H1 (cell line): ENCODE measurements at regions of chr2 and their contacts with region 1.

Region 1: DNA sequence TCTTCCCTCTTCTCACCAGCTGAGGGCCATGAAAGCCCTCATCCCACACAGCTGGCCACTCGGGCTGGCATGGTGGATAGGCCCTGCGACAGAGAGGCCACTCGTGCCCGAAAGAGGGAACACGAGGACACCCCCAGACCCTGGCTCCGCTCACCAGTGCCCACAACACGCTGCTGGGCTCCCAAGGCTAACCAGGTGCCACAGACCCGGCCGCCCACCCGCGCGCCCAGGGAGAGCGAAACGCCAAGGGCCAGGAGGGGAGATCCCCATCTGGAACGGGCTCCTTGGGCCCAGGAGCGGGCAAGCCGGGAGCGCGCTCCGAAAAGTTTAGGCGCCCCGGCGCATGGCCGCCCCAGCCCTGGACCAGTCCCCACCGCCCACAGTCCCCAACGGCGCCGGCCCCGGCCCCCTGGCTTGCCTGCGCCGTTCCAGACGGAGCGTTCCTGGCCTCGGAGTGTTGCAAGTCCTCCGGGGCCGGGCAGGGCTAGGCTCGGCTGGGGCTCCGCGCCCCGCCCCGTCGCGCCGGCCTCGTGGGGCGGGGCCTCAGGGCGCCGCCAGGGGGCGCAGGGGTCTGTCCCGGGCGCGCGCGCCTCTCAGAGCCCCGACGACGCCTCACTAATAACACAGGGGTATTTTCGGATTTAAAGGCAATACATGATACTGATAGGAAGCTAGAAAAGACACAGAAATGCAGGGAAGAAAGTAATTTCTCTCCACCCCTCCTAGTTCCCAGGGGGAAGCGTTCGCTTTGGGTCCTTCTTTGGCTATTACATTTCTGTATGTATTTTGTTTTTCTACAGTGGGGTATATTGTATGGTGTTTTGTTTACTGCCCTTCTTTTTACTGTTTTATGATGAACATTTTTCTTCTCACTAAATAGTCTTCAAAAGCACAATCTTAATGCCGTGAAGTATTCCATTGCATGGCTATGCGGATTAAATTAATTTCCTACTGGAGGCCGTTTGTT is at the start of gene TMBIM1:
- DNase-seq: peak in 1 of 2 experiments; percentile 88
- H3K4me3 ChIP-seq: peak within 1 kb of the TSS; percentile 51 to 66 (median 64)
- H3K27ac ChIP-seq: no peak within 1 kb of the TSS
- H3K4me1 ChIP-seq: peaks cover 0 to 9% (median 4%) of the 10 kb centered on the region in 4 experiments; a peak in 6 of 7 replicates
- H3K27me3 ChIP-seq: no peaks in the 10 kb centered on the region
- CTCF ChIP-seq: peak; percentile 64 to 87 (median 73)
- EP300 ChIP-seq: no peak
- POLR2A ChIP-seq: no peak
- RAD21 ChIP-seq: peak; percentile 34 to 66; a peak in 3 of 4 replicates
- total RNA-seq, gene TMBIM1: 22.1 and 24.5 TPM in 2 replicates

Region 2: GRCh38 chr2:218387374-218388194 is 95.3 kb after region 1 on chr2:
- CTCF ChIA-PET with region 1: interaction called, 94 read pairs
- POLR2A ChIA-PET with region 1: no interaction called
- DNase-seq: peak in 1 of 2 experiments; percentile 94
- H3K4me3 ChIP-seq: peak overlapping the region; percentile 41 to 76 (median 58)
- H3K27ac ChIP-seq: no peak overlapping the region; the same call in 1 of the 2 replicates
- H3K4me1 ChIP-seq: peaks cover 0 to 5% (median 3%) of the 10 kb centered on the region in 4 experiments; a peak in 5 of 7 replicates
- H3K27me3 ChIP-seq: peaks cover 0 to 17% (median 11%) of the 10 kb centered on the region in 4 experiments; a peak in 5 of 7 replicates
- CTCF ChIP-seq: no peak
- EP300 ChIP-seq: no peak
- POLR2A ChIP-seq: peak in 1 of 2 experiments; percentile 70; a peak in 2 of 3 replicates
- RAD21 ChIP-seq: no peak

Region 3: GRCh38 chr2:218395797-218396687 is 103.7 kb after region 1 on chr2:
- CTCF ChIA-PET with region 1: interaction called, 94 read pairs
- POLR2A ChIA-PET with region 1: interaction called, 5 read pairs
- DNase-seq: peak; percentile 71 to 96
- H3K4me3 ChIP-seq: peak overlapping the region; percentile 49 to 77 (median 64)
- H3K27ac ChIP-seq: peak overlapping the region; percentile 94
- H3K4me1 ChIP-seq: peaks cover 0 to 39% (median 25%) of the 10 kb centered on the region in 4 experiments; a peak in 6 of 7 replicates
- H3K27me3 ChIP-seq: peaks cover 22 to 34% (median 31%) of the 10 kb centered on the region in 4 experiments
- CTCF ChIP-seq: peak in 2 of 3 experiments; percentile 70 to 75; a peak in 3 of 4 replicates
- EP300 ChIP-seq: 0 out of 3 replicates have a peak, but pooled peaks of 1 of the 2 experiments have one; percentile 69
- POLR2A ChIP-seq: no peak; a peak in 1 of 3 replicates
- RAD21 ChIP-seq: peak; percentile 60 to 69